AG04450 (cell line): ENCODE measurements at regions of chr5 and their contacts with region 1.

Region 1: GRCh38 chr5:121378559-121379359 is 472.9 kb upstream of the FTMT start:
- DNase-seq: no peak
- H3K4me3 ChIP-seq: no peak overlapping the region
- H3K27ac ChIP-seq: no peak overlapping the region
- H3K27me3 ChIP-seq: no peaks in the 10 kb centered on the region
- CTCF ChIP-seq: no peak

Region 2: DNA sequence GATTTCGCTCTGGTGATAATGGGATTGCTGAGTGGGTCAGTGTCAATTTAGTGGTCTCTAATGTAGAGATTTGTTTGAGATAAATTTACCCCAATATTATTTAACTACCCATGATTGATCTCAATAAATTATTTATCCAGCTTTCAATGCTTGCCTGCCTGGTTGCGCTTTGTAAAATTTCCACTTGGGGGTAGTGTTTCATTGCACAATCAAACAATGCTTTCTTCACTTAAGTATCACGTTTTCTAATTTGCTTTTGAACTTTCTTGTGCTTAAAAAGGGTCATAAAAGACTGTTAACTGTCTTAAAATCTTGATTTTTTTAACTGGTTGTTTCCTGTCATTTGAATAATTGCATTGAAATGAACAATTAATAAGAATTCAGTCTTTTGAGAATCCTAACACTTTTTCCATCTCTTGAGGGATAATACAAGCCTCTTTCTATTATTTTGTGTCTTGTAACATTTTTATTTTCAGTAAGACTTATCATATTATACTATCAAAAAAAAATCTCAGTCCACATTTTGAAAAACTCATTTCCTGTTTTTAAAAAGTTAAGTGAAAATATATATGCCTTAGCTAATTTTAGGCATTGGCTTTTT is 1907.8 kb before region 1 on chr5:
- CTCF ChIA-PET with region 1: interaction called, 10 read pairs
- POLR2A ChIA-PET with region 1: no interaction called
- DNase-seq: no peak
- H3K4me3 ChIP-seq: no peak overlapping the region
- H3K27ac ChIP-seq: no peak overlapping the region
- H3K27me3 ChIP-seq: no peaks in the 10 kb centered on the region
- CTCF ChIP-seq: peak; percentile 76